Transverse colon (tissue), 4 donors: ENCODE measurements at regions of chr13 and their contacts with region 1.

Region 1: DNA sequence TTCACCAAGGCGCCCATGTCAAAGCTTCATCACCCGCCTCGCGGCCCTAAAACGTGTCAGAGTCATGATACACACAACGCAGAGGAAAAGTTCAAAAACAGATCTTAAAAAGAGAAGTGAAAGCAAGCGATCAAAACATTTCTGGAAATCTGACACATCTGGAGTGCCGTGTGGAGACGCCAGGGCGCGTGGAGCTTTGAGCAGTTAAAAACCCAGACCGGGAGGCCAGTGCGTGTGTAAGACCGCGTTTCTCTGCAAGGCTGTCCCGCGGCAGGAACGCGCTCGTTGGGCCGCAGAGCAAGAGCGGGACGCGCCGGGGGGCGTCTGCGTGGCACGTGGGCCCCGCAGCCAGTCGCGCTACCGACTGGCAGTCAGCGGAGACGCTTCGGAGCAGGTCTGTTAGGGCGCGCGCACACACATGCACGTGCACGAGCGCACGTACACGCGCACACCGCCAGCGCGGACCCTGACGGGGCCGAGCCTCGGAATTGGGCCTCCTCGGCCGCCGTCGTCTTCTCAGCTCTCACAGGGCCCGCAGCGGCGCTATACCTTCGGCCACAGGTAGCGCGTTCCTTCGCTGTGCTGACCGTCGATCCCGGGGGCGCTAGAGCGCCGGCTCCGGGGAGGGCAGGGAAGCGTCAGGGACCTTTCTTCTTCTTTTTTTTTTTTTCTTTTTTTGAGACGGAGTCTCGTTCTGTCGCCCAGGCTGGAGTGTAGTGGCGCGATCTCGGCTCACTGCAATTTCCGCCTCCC is 35.8 kb downstream of the RNF6 start:
- DNase-seq: peak; percentile 94
- H3K4me3 ChIP-seq: peak overlapping the region; percentile 44 to 73 (median 56)
- H3K27ac ChIP-seq: peak overlapping the region; percentile 80 to 89 (median 87)
- H3K4me1 ChIP-seq: peaks cover 3 to 9% (median 9%) of the 10 kb centered on the region in 4 donors
- H3K27me3 ChIP-seq: no peaks in the 10 kb centered on the region
- CTCF ChIP-seq: peak; percentile 11 to 84 (median 53)
- EP300 ChIP-seq: no peak
- POLR2A ChIP-seq: peak; percentile 40

Region 2: GRCh38 chr13:25286969-25287961 is 899.0 kb before region 1 on chr13 and contains the start of gene MTMR6:
- in situ Hi-C with region 1: loop called in 1 of 4 experiments (anchors 25 kb)
- intact Hi-C with region 1: no loop called
- DNase-seq: peak; percentile 94
- H3K4me3 ChIP-seq: peak within 1 kb of the TSS; percentile 68 to 88 (median 74)
- H3K27ac ChIP-seq: peak within 1 kb of the TSS; percentile 90 to 91 (median 90)
- H3K4me1 ChIP-seq: peaks cover 4 to 26% (median 6%) of the 10 kb centered on the region in 4 donors
- H3K27me3 ChIP-seq: peaks cover 28% of the 10 kb centered on the region
- CTCF ChIP-seq: peak; percentile 100
- EP300 ChIP-seq: no peak
- POLR2A ChIP-seq: peak; percentile 77
- total RNA-seq, gene MTMR6: 6.4 to 16.4 (median 11.9) TPM

Region 3: GRCh38 chr13:26502826-26503225 is 316.5 kb after region 1 on chr13:
- in situ Hi-C with region 1: loop called (anchors 5 to 10 kb)
- intact Hi-C with region 1: loop called (anchors 10 kb)
- DNase-seq: no peak
- H3K4me3 ChIP-seq: no peak overlapping the region
- H3K27ac ChIP-seq: no peak overlapping the region
- H3K4me1 ChIP-seq: no peaks in the 10 kb centered on the region
- H3K27me3 ChIP-seq: no peaks in the 10 kb centered on the region
- CTCF ChIP-seq: no peak
- EP300 ChIP-seq: no peak
- POLR2A ChIP-seq: no peak

Region 4: DNA sequence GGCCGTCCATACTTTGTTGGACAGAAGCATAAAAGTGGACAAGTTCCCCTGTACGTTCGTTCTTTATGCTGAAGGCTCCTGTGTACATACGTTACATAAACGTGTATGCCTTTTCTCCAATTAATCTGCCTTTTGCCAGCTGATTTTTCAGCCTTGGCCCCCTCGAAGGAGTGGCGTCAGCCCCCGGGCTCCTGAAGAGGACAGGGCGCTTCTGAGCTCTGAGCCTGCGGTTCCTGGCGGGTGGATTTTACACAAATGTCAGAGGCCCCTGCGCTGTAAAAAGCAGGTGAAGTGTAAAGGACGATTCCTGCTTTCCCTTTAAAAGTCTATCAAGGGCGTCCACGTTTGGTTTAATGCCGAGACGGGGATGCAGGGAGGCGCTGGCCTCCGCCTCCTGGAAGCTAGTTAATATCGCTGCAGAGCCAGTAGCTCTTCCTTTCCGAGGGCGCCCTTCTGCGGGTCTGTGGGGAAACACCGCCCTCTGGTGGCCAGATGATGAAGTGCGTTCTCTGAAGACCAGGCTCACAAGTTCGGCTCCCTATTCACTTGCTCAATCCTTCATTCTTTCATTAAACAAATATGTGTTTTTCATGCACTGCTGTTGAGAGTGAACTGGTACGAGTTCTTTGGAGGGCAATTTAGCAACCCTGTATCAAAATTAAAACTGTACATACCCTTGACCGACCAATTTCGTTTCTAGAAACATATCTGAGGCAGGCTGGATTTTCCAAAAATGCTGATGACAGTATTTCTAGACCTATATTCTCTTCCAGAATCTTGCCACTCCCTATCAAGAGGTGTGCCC is 512.3 kb after region 1 on chr13:
- in situ Hi-C with region 1: loop called (anchors 5 to 25 kb)
- intact Hi-C with region 1: loop called (anchors 5 kb)
- DNase-seq: peak; percentile 85
- H3K4me3 ChIP-seq: no peak overlapping the region
- H3K27ac ChIP-seq: no peak overlapping the region
- H3K4me1 ChIP-seq: peaks cover 0 to 5% (median 2%) of the 10 kb centered on the region in 4 donors
- H3K27me3 ChIP-seq: peaks cover 6% of the 10 kb centered on the region
- CTCF ChIP-seq: peak; percentile 93 to 97 (median 96)
- EP300 ChIP-seq: no peak
- POLR2A ChIP-seq: no peak

Region 5: DNA sequence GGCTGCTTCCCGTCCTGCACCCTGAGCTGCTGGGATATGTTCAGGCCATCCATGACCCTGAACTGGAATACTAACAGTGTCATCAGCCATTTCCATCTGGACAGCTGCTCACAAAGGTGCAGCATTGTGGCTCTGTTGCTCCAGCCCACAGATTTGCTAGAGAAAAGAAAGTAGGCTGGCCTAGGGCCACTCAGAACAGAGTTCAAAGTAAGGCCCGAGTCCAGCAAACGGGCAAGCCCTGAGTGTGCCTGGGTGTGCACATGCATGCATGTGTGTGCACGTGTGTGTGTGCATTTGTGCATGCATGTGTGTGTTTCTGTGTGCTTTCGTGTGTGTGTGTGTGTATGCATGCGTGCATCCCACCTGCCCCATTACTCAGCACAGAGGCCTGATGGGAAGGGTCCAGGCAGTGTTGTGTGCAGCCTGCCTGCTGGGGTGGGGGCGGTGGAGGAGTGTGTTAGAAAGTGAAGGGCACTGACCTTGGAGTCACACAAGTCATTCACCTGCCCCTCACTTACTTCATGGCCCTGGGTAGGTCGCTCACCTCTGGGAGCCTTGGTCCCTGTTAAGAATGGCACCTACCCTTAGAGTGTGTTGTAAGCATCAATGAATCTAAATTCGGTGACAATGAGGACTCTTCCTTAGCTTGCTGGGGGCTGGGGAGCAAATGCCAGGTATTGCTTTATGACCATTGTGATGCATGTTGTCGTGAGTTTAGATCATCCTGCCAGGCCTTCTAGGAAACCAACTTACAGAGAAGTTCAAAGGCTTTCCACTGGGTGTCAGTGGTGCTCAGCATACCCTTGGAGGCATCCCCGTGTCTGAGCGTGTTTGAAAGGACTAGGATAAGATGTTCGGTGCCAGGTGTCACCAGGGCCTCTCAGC is 521.1 kb after region 1 on chr13:
- in situ Hi-C with region 1: loop called in 1 of 4 experiments (anchors 10 kb)
- intact Hi-C with region 1: no loop called
- DNase-seq: no peak
- H3K4me3 ChIP-seq: no peak overlapping the region
- H3K27ac ChIP-seq: no peak overlapping the region
- H3K4me1 ChIP-seq: no peaks in the 10 kb centered on the region
- H3K27me3 ChIP-seq: peaks cover 3% of the 10 kb centered on the region
- CTCF ChIP-seq: peak; percentile 26 to 56 (median 50)
- EP300 ChIP-seq: no peak
- POLR2A ChIP-seq: no peak

Region 6: DNA sequence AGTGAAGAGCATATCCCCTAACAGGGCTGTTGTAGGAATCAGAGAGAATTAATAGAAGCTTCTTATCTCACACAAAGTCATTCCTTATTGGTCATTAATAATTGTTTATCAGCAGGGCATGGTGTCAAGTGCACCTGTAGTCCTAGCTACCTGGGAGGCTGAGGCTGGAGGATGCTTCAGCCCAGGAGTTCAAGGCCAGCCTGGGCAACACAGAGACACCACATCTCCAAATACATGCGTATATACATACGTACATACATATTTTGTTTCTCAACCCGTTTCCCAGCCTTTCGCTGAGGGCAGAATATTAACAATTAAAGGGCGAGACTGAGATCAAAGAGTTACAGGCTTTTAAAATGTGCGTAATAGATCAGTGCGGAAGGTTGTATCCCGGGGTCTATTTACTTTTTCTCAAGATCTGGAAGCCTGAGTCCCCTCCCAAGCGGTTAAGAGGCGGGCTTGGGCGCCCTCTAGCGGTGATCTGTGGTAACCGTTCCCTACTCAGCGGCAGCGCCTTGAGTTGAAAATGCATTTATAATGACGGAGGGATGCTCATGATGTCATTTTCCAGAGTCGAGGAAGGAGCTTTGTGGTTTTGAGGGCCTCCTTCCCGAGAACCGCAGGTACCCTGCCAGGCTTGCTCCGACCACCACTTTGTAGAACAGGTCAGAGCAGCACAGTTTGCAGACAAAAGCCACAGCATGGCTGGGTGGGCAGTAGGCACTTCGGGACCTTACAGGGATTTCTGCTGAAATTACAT is 743.9 kb after region 1 on chr13:
- in situ Hi-C with region 1: loop called in 1 of 4 experiments (anchors 25 kb)
- intact Hi-C with region 1: no loop called
- DNase-seq: peak; percentile 72
- H3K4me3 ChIP-seq: no peak overlapping the region
- H3K27ac ChIP-seq: no peak overlapping the region
- H3K4me1 ChIP-seq: peaks cover 0 to 6% (median 2%) of the 10 kb centered on the region in 4 donors
- H3K27me3 ChIP-seq: no peaks in the 10 kb centered on the region
- CTCF ChIP-seq: peak; percentile 76 to 98 (median 96)
- EP300 ChIP-seq: no peak
- POLR2A ChIP-seq: no peak